HCT116 (cell line): ENCODE measurements at regions of chr12 and their contacts with region 1.

Region 1: GRCh38 chr12:49740930-49741881 is at the start of gene TMBIM6:
- DNase-seq: peak; percentile 100
- ATAC-seq: peak; percentile 95
- H3K4me3 ChIP-seq: peak within 1 kb of the TSS; percentile 83 to 89
- H3K27ac ChIP-seq: peak within 1 kb of the TSS; percentile 66
- H3K4me1 ChIP-seq: peaks cover 8 to 21% of the 10 kb centered on the region in 2 experiments; a peak in 3 of 4 replicates
- H3K27me3 ChIP-seq: no peaks in the 10 kb centered on the region
- CTCF ChIP-seq: peak; percentile 83 to 95 (median 93)
- POLR2A ChIP-seq: peak; percentile 93
- RAD21 ChIP-seq: peak; percentile 60
- total RNA-seq, gene TMBIM6: 510 TPM

Region 2: GRCh38 chr12:49626169-49626835 is 114.9 kb before region 1 on chr12:
- CTCF ChIA-PET with region 1: interaction called, 7 read pairs
- POLR2A ChIA-PET with region 1: interaction called, 10 read pairs
- RAD21 ChIA-PET with region 1: interaction called in 1 of 2 experiments, 3 read pairs
- intact Hi-C with region 1: no loop called
- DNase-seq: no peak
- ATAC-seq: no peak
- H3K4me3 ChIP-seq: no peak overlapping the region
- H3K27ac ChIP-seq: no peak overlapping the region
- H3K4me1 ChIP-seq: peaks cover 22 to 63% of the 10 kb centered on the region in 2 experiments
- H3K27me3 ChIP-seq: no peaks in the 10 kb centered on the region
- CTCF ChIP-seq: peak in 1 of 3 experiments; percentile 30; a peak in 2 of 6 replicates
- POLR2A ChIP-seq: no peak
- RAD21 ChIP-seq: no peak

Region 3: DNA sequence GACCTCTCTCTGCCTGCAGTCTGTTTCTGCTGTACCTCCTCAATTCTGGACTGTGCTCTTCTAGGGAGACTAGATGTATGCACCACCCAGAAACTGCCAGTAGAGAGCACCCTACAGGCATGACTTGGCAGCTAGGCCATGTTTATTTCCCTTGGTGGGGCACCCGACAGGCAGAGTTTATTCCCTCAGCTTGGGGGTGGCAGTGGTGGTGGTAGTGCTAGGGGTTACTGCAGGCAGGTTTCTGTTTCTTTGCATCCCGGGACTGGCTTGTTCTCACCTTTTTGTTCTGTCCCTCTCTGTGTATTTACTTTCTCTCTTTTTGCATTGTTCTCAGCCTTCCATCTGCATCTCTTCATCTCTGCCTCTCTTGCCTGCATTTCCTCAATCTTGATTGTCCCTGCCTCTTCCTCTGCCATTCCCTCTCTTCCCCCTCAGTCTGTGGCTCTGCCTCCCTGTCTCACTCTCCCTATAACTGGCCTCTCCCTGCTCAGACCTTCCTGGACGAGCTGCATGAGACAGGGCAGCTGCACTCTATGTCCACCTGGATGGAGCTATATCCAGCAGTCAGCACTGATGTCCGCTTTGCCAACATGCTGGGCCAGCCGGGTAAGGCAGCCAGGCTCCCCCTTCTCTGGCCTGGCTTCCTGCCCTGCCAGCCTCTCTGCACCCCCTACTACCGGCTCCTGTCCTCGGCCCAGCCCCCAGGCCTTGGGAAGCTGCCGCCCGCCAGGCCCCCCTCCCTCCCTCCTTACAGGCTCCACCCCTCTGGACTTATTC is 104.0 kb before region 1 on chr12:
- CTCF ChIA-PET with region 1: interaction called, 3 read pairs
- POLR2A ChIA-PET with region 1: interaction called, 10 read pairs
- RAD21 ChIA-PET with region 1: no interaction called
- intact Hi-C with region 1: no loop called
- DNase-seq: peak; percentile 22
- ATAC-seq: peak; percentile 96
- H3K4me3 ChIP-seq: no peak overlapping the region
- H3K27ac ChIP-seq: no peak overlapping the region
- H3K4me1 ChIP-seq: no peaks in the 10 kb centered on the region
- H3K27me3 ChIP-seq: no peaks in the 10 kb centered on the region
- CTCF ChIP-seq: peak; percentile 46 to 78 (median 69); a peak in 5 of 6 replicates
- POLR2A ChIP-seq: no peak
- RAD21 ChIP-seq: peak; percentile 65

Region 4: DNA sequence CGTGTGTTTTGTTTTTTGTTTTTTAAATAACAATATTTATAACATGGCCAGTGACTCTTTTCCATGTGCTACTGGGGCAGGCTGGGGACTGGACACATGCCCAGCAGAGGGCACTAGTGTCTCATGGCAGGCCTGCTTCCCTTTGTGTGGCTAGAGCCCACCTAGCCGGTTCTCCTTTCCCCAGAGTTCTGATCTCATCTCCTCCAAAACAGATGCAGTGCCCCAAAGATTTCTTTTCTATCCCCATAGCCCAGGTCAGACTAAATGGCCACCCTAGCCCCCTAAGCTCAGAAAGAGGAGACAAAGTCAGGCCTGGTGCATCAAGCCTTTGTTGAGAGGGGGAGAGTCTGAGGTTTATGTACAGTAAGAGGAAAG is 96.6 kb before region 1 on chr12:
- CTCF ChIA-PET with region 1: interaction called, 9 read pairs
- POLR2A ChIA-PET with region 1: interaction called, 14 read pairs
- RAD21 ChIA-PET with region 1: no interaction called
- intact Hi-C with region 1: no loop called
- DNase-seq: peak; percentile 21
- ATAC-seq: peak; percentile 87
- H3K4me3 ChIP-seq: no peak overlapping the region
- H3K27ac ChIP-seq: no peak overlapping the region
- H3K4me1 ChIP-seq: peaks cover 0 to 4% of the 10 kb centered on the region in 2 experiments; a peak in 2 of 4 replicates
- H3K27me3 ChIP-seq: no peaks in the 10 kb centered on the region
- CTCF ChIP-seq: peak; percentile 89 to 96 (median 90)
- POLR2A ChIP-seq: no peak
- RAD21 ChIP-seq: peak; percentile 95

Region 5: GRCh38 chr12:49707128-49707811 is 33.9 kb before region 1 on chr12 and contains the start of gene FMNL3:
- CTCF ChIA-PET with region 1: interaction called, 6 read pairs
- POLR2A ChIA-PET with region 1: interaction called, 7 read pairs
- RAD21 ChIA-PET with region 1: no interaction called
- intact Hi-C with region 1: loop called (anchors 1 kb)
- DNase-seq: peak; percentile 79
- ATAC-seq: peak; percentile 98
- H3K4me3 ChIP-seq: peak within 1 kb of the TSS; percentile 45 to 56
- H3K27ac ChIP-seq: no peak within 1 kb of the TSS; the same call in 1 of the 2 replicates
- H3K4me1 ChIP-seq: peaks cover 0 to 26% of the 10 kb centered on the region in 2 experiments
- H3K27me3 ChIP-seq: peaks cover 31% of the 10 kb centered on the region; the same call in 1 of the 2 replicates
- CTCF ChIP-seq: peak; percentile 90 to 96 (median 90)
- POLR2A ChIP-seq: no peak
- RAD21 ChIP-seq: peak; percentile 91
- total RNA-seq, gene FMNL3: 3.5 TPM

Region 6: GRCh38 chr12:49720214-49720613 is 21.0 kb before region 1 on chr12:
- CTCF ChIA-PET with region 1: interaction called, 8 read pairs
- POLR2A ChIA-PET with region 1: interaction called, 32 read pairs
- RAD21 ChIA-PET with region 1: interaction called in 1 of 2 experiments, 3 read pairs
- intact Hi-C with region 1: no loop called
- DNase-seq: no peak
- ATAC-seq: peak; percentile 36; the same call in 1 of the 2 replicates
- H3K4me3 ChIP-seq: no peak overlapping the region
- H3K27ac ChIP-seq: no peak overlapping the region
- H3K4me1 ChIP-seq: no peaks in the 10 kb centered on the region
- H3K27me3 ChIP-seq: peaks cover 16% of the 10 kb centered on the region
- CTCF ChIP-seq: peak in 2 of 3 experiments; percentile 23; a peak in 2 of 6 replicates
- POLR2A ChIP-seq: no peak
- RAD21 ChIP-seq: peak; percentile 32; the same call in 1 of the 2 replicates

Region 7: GRCh38 chr12:49763006-49763591 is 21.9 kb after region 1 on chr12:
- CTCF ChIA-PET with region 1: interaction called, 9 read pairs
- POLR2A ChIA-PET with region 1: interaction called, 11 read pairs
- RAD21 ChIA-PET with region 1: no interaction called
- intact Hi-C with region 1: no loop called
- DNase-seq: no peak
- ATAC-seq: peak; percentile 90
- H3K4me3 ChIP-seq: no peak overlapping the region
- H3K27ac ChIP-seq: no peak overlapping the region
- H3K4me1 ChIP-seq: no peaks in the 10 kb centered on the region
- H3K27me3 ChIP-seq: no peaks in the 10 kb centered on the region
- CTCF ChIP-seq: peak; percentile 46 to 83 (median 75); a peak in 5 of 6 replicates
- POLR2A ChIP-seq: no peak
- RAD21 ChIP-seq: peak; percentile 17; the same call in 1 of the 2 replicates